Breast epithelium (tissue), 4 donors: ENCODE measurements at regions of chr12 and their contacts with region 1.

Region 1: GRCh38 chr12:53625946-53626701 is at the start of gene ATF7:
- DNase-seq: peak; percentile 98 to 99
- H3K4me3 ChIP-seq: peak within 1 kb of the TSS; percentile 56 to 72 (median 60)
- H3K27ac ChIP-seq: peak within 1 kb of the TSS; percentile 94
- H3K4me1 ChIP-seq: no peaks in the 10 kb centered on the region
- H3K27me3 ChIP-seq: no peaks in the 10 kb centered on the region
- CTCF ChIP-seq: peak in 2 of 3 donors; percentile 22
- POLR2A ChIP-seq: peak; percentile 76
- total RNA-seq, gene ATF7: 31.4 to 34.1 (median 33.4) TPM

Region 2: GRCh38 chr12:53532524-53533445 is 93.3 kb before region 1 on chr12:
- intact Hi-C with region 1: loop called (anchors 1 kb)
- DNase-seq: no peak
- H3K4me3 ChIP-seq: no peak overlapping the region
- H3K27ac ChIP-seq: peak overlapping the region; percentile 2 to 14
- H3K4me1 ChIP-seq: no peaks in the 10 kb centered on the region
- H3K27me3 ChIP-seq: no peaks in the 10 kb centered on the region
- CTCF ChIP-seq: no peak
- POLR2A ChIP-seq: no peak

Region 3: DNA sequence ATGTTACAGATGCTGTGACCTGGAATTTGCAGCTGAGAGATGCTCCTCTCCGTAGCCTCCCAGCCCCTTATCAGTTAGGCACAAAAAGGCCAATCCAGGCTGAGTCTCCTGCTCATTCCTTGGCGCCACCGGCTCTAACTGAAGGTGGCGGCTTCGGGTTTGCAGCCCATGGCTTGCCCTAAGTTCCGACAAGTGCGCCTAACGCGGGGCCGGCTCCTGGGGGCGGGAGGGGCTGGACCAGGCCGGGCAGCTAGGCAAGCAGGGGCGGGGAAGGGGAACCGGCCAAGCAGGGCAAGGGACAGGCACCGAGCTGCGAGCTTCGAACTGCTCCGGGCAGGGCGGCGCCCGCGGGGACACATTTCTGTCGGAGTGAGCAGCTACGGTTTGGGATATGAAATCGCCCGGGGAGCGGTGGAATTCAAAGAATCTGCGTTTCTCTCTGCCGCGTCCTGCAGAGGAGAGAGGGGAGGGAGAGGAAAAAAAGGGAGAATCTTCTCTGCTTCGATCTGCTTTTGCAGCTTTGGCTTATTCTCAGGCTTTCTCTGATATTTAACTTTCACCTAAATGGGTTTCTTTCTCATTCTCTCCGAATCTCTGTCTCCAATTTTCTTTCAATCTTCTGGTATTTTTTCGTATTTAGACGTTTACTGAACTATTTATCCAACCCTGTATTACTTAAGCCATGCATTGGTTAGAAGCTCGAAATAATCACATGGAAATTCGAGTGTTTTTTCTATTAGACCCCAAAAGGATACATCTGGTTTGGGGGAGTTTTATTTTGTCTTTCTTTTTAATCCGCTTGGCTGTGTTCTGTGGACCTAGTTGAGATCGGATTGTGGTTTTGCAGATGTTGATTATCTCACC is 327.0 kb after region 1 on chr12:
- intact Hi-C with region 1: no loop called
- DNase-seq: no peak
- H3K4me3 ChIP-seq: no peak overlapping the region
- H3K27ac ChIP-seq: no peak overlapping the region
- H3K4me1 ChIP-seq: no peaks in the 10 kb centered on the region
- H3K27me3 ChIP-seq: peaks cover 26 to 95% of the 10 kb centered on the region in 2 donors
- CTCF ChIP-seq: no peak
- POLR2A ChIP-seq: no peak